ENCODE measurements at regions of chr17 and their contacts with region 1.

Region 1: DNA sequence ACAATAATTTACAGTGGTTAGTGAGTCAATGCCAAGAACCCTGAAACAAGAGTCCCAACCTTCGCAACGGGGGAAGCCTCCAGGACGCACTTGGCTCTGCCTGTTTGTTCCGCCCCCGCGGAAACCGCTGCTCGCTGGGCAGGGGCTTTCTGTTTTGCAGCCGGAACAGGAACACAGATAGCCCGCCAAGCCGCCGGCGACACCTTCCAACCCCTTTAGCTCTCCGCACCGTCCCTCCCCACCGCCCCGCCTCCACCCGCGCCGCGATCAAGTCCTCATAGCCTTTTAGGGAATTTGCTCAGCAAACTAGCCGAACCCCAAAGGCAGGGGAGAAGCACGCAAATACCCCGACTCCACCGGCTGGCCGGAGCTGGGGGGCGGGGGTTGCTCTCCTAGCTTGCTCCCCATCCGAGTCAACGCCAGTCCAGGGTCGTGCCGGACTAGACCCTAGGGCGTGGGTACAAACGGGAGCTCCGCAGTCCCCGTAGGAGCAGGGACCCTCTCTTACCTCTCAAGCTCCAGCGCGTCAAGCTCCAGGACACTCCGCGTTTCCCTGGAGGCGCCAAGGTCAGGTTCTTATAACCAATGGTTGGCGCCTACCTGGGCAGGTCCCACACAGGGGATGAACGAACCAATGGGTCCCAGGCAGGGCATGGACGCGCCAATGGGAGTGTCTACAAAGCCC is at the start of gene SLFN13:
- DNase-seq: peak; percentile 91
- ATAC-seq: peak; percentile 98
- H3K4me3 Mint-ChIP-seq: peak within 1 kb of the TSS; percentile 73
- H3K27ac Mint-ChIP-seq: peak within 1 kb of the TSS; percentile 75
- H3K4me1 Mint-ChIP-seq: peaks cover 26% of the 10 kb centered on the region
- H3K27me3 Mint-ChIP-seq: no peaks in the 10 kb centered on the region
- total RNA-seq, gene SLFN13: 56.2 to 56.3 TPM

Region 2: GRCh38 chr17:35373534-35373983 is 74.8 kb before region 1 on chr17 and contains the start of gene SLFN11:
- CTCF ChIA-PET with region 1: no interaction called
- POLR2A ChIA-PET with region 1: interaction called, 11 read pairs
- DNase-seq: peak; percentile 86
- ATAC-seq: peak; percentile 81
- H3K4me3 Mint-ChIP-seq: peak within 1 kb of the TSS; percentile 99
- H3K27ac Mint-ChIP-seq: peak within 1 kb of the TSS; percentile 98
- H3K4me1 Mint-ChIP-seq: peaks cover 57% of the 10 kb centered on the region
- H3K27me3 Mint-ChIP-seq: peaks cover 3% of the 10 kb centered on the region
- total RNA-seq, gene SLFN11: 40.0 to 50.1 TPM

Region 3: DNA sequence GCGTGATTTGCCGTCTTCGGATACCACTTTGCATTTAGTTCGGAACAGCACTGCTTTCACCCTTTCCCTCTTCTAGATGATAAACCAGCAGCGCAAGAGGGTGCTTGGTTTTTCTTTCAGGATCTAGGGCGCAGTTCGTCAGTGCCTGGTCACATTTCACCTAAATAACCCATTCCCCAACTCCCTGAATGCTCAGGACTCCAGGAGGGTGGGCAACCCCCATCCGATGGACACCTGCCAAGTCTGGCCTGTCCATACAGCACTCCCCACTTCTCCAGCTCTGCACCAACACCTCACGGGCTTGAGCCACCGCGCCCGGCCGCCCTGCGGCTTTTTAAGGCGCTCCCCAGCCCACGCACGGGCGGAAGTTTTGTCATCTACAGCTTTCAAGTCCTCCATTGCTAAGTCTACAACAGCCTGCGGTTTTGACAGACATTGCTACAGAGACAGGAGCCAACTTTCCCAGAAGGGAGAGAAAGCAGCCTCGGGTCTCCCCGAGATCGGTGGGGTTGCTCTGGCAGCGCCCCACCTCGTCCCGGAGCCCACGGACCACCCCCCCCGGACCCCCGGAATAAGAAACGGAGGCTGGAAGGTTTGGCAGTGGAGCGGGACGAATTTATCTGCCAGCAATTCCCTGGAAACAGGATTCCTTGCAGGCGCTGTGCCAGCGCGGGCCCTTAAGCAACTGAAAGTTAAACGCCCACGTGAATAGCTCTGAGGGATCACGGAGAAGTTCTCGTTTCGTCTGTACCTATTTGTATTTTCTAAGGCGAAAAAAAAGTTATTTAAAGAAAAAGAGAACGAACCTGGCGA is 38.8 kb after region 1 on chr17:
- CTCF ChIA-PET with region 1: no interaction called
- POLR2A ChIA-PET with region 1: interaction called, 10 read pairs
- DNase-seq: peak; percentile 76
- ATAC-seq: peak; percentile 69
- H3K4me3 Mint-ChIP-seq: peak overlapping the region; percentile 76
- H3K27ac Mint-ChIP-seq: peak overlapping the region; percentile 90
- H3K4me1 Mint-ChIP-seq: peaks cover 71% of the 10 kb centered on the region
- H3K27me3 Mint-ChIP-seq: no peaks in the 10 kb centered on the region